Activated T-helper 1 cell treated with anti-CD3 and anti-CD28 coated beads, Interleukin-12 subunit alpha, Interleukin-12 subunit beta, Interleukin-2, Interleukin-4 antibody, amounts not matched to agents 30 ng/mL and 10 ng/mL and 1 ng/mL, durations not matched to agents 14 hours and 24 hours and 36 hours (primary cell): ENCODE measurements at regions of chr14 and their contacts with region 1.

Region 1: GRCh38 chr14:32576088-32576795 is 247.1 kb downstream of the AKAP6 start:
- DNase-seq: peak; percentile 6
- H3K4me3 Mint-ChIP-seq: no peak overlapping the region
- H3K27ac Mint-ChIP-seq: no peak overlapping the region
- H3K4me1 Mint-ChIP-seq: no peaks in the 10 kb centered on the region
- H3K27me3 Mint-ChIP-seq: peaks cover 15% of the 10 kb centered on the region

Region 2: GRCh38 chr14:32666308-32666707 is 90.1 kb after region 1 on chr14:
- intact Hi-C with region 1: no loop called
- DNase-seq: no peak
- H3K4me3 Mint-ChIP-seq: no peak overlapping the region
- H3K27ac Mint-ChIP-seq: no peak overlapping the region
- H3K4me1 Mint-ChIP-seq: no peaks in the 10 kb centered on the region
- H3K27me3 Mint-ChIP-seq: no peaks in the 10 kb centered on the region

Region 3: GRCh38 chr14:33343009-33343408 is 766.8 kb after region 1 on chr14:
- intact Hi-C with region 1: loop called (anchors 5 kb)
- DNase-seq: no peak
- H3K4me3 Mint-ChIP-seq: no peak overlapping the region
- H3K27ac Mint-ChIP-seq: no peak overlapping the region
- H3K4me1 Mint-ChIP-seq: no peaks in the 10 kb centered on the region
- H3K27me3 Mint-ChIP-seq: no peaks in the 10 kb centered on the region

Region 4: DNA sequence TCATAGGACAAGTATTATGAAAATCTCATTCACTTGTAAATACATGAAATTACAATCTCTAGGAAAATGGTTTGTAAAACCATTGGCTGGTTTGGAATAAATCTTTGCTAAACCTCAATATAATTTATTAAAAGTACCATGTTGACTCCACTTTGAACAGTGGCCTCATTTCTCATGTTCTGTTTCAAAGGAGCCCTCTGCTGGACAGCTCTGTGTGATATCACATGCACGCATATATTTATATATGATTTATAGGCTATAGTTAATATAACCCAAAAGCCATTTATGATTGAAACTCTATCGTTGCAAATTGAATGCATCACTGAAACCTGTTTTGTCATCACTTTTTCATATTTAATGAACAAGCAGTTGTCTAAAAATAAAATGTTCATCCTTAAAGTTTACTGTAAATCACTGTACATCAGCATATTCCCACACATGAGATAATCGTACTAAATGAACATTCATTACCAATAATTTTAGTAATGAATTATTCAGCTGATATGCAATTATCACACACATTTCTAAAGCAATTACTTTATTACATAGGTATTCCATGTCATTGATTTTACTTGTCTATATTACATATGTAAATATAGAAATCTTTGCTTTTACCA is 856.3 kb after region 1 on chr14:
- intact Hi-C with region 1: loop called (anchors 5 kb)
- DNase-seq: no peak
- H3K4me3 Mint-ChIP-seq: no peak overlapping the region
- H3K27ac Mint-ChIP-seq: no peak overlapping the region
- H3K4me1 Mint-ChIP-seq: peaks cover 11% of the 10 kb centered on the region
- H3K27me3 Mint-ChIP-seq: no peaks in the 10 kb centered on the region

Region 5: GRCh38 chr14:33792720-33793368 is 1216.6 kb after region 1 on chr14:
- intact Hi-C with region 1: loop called (anchors 1 kb)
- DNase-seq: peak; percentile 46
- H3K4me3 Mint-ChIP-seq: peak overlapping the region; percentile 72
- H3K27ac Mint-ChIP-seq: no peak overlapping the region
- H3K4me1 Mint-ChIP-seq: peaks cover 24% of the 10 kb centered on the region
- H3K27me3 Mint-ChIP-seq: peaks cover 28% of the 10 kb centered on the region

Region 6: GRCh38 chr14:34300882-34301734 is 1724.9 kb after region 1 on chr14:
- intact Hi-C with region 1: loop called (anchors 1 kb)
- DNase-seq: no peak
- H3K4me3 Mint-ChIP-seq: no peak overlapping the region
- H3K27ac Mint-ChIP-seq: no peak overlapping the region
- H3K4me1 Mint-ChIP-seq: no peaks in the 10 kb centered on the region
- H3K27me3 Mint-ChIP-seq: peaks cover 1% of the 10 kb centered on the region

Region 7: DNA sequence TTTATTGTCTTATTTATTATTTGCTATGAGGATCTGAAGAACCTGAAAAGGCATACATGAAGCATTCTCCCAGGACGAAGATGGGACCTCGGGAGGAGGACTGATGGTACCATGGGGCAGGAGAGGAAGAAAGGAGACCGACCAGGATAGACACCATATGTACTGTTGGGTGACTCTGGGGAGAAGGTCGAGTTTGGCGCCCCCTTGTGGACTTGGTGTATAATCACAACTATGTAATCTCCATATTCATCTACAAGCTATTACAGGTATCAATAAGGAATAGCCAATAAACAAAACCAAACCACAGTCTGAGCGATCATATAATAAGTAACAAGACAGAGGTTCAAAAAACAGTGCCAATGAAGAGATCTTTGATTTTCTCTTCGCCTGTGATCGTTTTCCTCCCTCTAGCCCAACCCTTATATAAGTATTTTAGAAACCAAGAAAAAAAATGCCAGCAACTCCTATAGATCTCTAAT is 1746.7 kb after region 1 on chr14:
- intact Hi-C with region 1: loop called (anchors 1 kb)
- DNase-seq: peak; percentile 41
- H3K4me3 Mint-ChIP-seq: no peak overlapping the region
- H3K27ac Mint-ChIP-seq: no peak overlapping the region
- H3K4me1 Mint-ChIP-seq: no peaks in the 10 kb centered on the region
- H3K27me3 Mint-ChIP-seq: peaks cover 6% of the 10 kb centered on the region